ENCODE measurements at regions of chr6 and their contacts with region 1.

Region 1: GRCh38 chr6:170087941-170088581 is 202.8 kb downstream of the DLL1 start:
- DNase-seq: peak; percentile 90
- H3K4me3 Mint-ChIP-seq: peak overlapping the region; percentile 91
- H3K27ac Mint-ChIP-seq: peak overlapping the region; percentile 98
- H3K4me1 Mint-ChIP-seq: peaks cover 34% of the 10 kb centered on the region
- H3K27me3 Mint-ChIP-seq: peaks cover 2% of the 10 kb centered on the region

Region 2: GRCh38 chr6:169990095-169991030 is 97.7 kb before region 1 on chr6:
- intact Hi-C with region 1: loop called (anchors 5 kb)
- DNase-seq: peak; percentile 82
- H3K4me3 Mint-ChIP-seq: peak overlapping the region; percentile 69
- H3K27ac Mint-ChIP-seq: peak overlapping the region; percentile 77
- H3K4me1 Mint-ChIP-seq: peaks cover 20% of the 10 kb centered on the region
- H3K27me3 Mint-ChIP-seq: peaks cover 6% of the 10 kb centered on the region

Region 3: DNA sequence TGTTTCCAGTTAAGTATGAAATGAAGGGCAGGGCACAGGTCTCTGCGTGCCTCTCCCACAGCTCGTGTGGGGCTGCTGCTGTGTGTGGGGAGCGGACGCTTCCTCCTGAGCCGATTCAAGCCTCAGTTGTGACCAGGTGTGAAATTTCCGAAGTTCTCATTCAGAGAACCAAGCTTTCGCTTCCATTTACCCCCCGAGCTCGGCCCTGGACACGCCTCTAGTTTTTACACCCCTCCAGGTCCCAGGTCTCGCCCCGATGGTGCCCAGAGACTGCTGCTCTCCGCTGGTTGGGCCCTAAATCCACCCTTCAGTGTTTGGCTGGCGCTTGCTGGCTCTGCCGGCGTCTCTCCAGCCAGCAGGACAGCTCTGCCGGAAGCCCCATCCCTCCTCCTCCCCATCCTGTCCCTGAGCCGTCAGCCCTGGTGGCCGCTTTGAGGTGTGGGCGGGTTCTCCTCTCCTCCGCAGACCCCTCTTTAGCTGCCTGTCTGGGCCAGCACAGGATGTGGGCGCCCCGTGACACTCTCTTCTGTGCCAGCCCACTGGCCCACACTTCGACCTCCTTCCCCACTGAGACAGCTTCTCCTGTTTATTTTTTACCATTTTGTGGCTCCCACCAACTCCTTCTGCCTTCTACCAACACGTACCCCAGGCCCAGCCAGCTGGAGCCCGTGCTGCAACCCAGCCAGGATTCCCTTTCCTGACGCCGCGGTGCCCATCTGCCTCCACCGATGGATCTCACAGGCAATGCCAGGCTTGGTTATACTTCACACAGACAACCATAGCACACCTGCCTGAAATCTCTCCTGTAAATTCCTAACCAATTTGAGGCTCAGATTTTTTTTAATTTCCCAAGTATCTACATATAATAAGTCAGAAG is 60.0 kb after region 1 on chr6:
- intact Hi-C with region 1: loop called (anchors 2 kb)
- DNase-seq: peak; percentile 78
- H3K4me3 Mint-ChIP-seq: peak overlapping the region; percentile 66
- H3K27ac Mint-ChIP-seq: peak overlapping the region; percentile 86
- H3K4me1 Mint-ChIP-seq: peaks cover 20% of the 10 kb centered on the region
- H3K27me3 Mint-ChIP-seq: peaks cover 22% of the 10 kb centered on the region

Measured in activated CD4-positive, alpha-beta T cell treated with anti-CD3 and anti-CD28 coated beads, Interleukin-2, amount 10 ng/mL, durations not matched to agents 24 days and 14 days (primary cell).